Motor neuron (in vitro differentiated cells): ENCODE measurements at regions of chr5 and their contacts with region 1.

Region 1: GRCh38 chr5:170278611-170279452 is 18.7 kb downstream of the LCP2 start:
- ATAC-seq: peak in 5 of 8 experiments; percentile 50 to 74 (median 66)
- H3K4me3 ChIP-seq: no peak overlapping the region
- H3K27ac ChIP-seq: no peak overlapping the region
- H3K4me1 ChIP-seq: peaks cover 22 to 24% of the 10 kb centered on the region in 2 donors

Region 2: GRCh38 chr5:169970911-169971765 is 307.7 kb before region 1 on chr5:
- in situ Hi-C with region 1: no loop called
- ATAC-seq: peak in 7 of 8 experiments; percentile 81 to 97 (median 95)
- H3K4me3 ChIP-seq: no peak overlapping the region
- H3K27ac ChIP-seq: peak overlapping the region; percentile 11 to 45
- H3K4me1 ChIP-seq: peaks cover 26 to 33% of the 10 kb centered on the region in 2 donors

Region 3: DNA sequence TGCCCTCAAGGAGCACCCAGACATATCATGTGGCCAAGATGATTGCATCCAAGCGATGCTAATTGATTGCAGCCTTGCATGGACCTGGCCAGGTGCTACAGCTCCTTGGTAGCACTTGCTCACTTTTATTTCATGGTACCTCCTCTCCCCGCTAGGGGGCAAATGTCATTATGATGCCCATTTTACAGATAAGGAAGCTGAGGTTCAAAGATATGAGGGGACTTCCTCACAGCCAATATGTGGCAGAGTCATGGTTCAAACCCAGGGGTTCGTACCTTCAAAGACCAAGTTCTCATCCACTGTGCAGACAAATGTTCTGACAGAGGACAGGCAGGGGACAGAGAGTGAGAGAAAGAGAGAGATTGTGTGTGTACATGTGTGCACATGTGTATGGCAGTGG is 132.3 kb after region 1 on chr5:
- in situ Hi-C with region 1: loop called in 2 of 9 experiments (anchors 10 to 25 kb)
- ATAC-seq: no peak
- H3K4me3 ChIP-seq: no peak overlapping the region
- H3K27ac ChIP-seq: no peak overlapping the region
- H3K4me1 ChIP-seq: peaks cover 12 to 20% of the 10 kb centered on the region in 2 donors

Region 4: GRCh38 chr5:170504031-170504596 is 225.3 kb after region 1 on chr5:
- in situ Hi-C with region 1: no loop called
- ATAC-seq: peak; percentile 83 to 97 (median 93)
- H3K4me3 ChIP-seq: peak overlapping the region; percentile 25 to 37 (median 33)
- H3K27ac ChIP-seq: peak overlapping the region in 1 of 2 donors; percentile 12
- H3K4me1 ChIP-seq: peaks cover 42 to 44% of the 10 kb centered on the region in 2 donors

Region 5: DNA sequence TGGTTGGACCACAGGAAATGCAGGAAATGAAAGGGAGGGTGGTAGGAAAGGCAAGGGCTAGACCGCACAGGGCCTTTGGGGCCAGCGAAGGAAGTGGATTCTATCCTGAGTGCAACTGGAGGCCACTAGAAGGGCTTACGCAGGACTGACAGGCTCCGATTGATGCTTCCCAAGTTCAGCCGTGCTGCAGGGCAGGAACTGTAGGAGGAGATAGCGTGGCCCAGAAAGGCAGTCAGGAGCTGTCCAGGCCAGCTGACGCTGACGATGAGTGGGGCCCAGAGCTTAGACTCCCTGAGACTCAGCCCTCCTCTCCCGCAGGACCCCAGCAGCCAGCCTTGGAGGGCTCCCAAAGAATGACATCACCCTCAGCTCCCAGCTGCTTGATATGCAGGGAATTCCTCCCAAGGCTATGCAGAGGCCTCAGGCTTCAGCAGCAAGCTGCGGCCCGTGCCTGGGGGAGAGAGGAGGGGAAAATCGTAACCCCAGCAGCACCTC is 273.8 kb after region 1 on chr5:
- in situ Hi-C with region 1: no loop called
- ATAC-seq: peak; percentile 94 to 98 (median 96)
- H3K4me3 ChIP-seq: no peak overlapping the region
- H3K27ac ChIP-seq: peak overlapping the region; percentile 80 to 85
- H3K4me1 ChIP-seq: peaks cover 44 to 56% of the 10 kb centered on the region in 2 donors